Breast epithelium (tissue), 4 donors: ENCODE measurements at regions of chr12 and their contacts with region 1.

Region 1: GRCh38 chr12:70353780-70354660 is 12.1 kb upstream of the KCNMB4 start:
- DNase-seq: no peak
- H3K4me3 ChIP-seq: no peak overlapping the region
- H3K27ac ChIP-seq: no peak overlapping the region
- H3K4me1 ChIP-seq: no peaks in the 10 kb centered on the region
- H3K27me3 ChIP-seq: no peaks in the 10 kb centered on the region
- CTCF ChIP-seq: no peak
- POLR2A ChIP-seq: no peak

Region 2: GRCh38 chr12:69851976-69852375 is 502.0 kb before region 1 on chr12:
- intact Hi-C with region 1: no loop called
- DNase-seq: no peak
- H3K4me3 ChIP-seq: no peak overlapping the region
- H3K27ac ChIP-seq: no peak overlapping the region
- H3K4me1 ChIP-seq: no peaks in the 10 kb centered on the region
- H3K27me3 ChIP-seq: no peaks in the 10 kb centered on the region
- CTCF ChIP-seq: no peak
- POLR2A ChIP-seq: no peak

Region 3: GRCh38 chr12:70080566-70080965 is 273.5 kb before region 1 on chr12:
- intact Hi-C with region 1: loop called (anchors 10 kb)
- DNase-seq: no peak
- H3K4me3 ChIP-seq: no peak overlapping the region
- H3K27ac ChIP-seq: no peak overlapping the region
- H3K4me1 ChIP-seq: no peaks in the 10 kb centered on the region
- H3K27me3 ChIP-seq: no peaks in the 10 kb centered on the region
- CTCF ChIP-seq: no peak
- POLR2A ChIP-seq: no peak

Region 4: DNA sequence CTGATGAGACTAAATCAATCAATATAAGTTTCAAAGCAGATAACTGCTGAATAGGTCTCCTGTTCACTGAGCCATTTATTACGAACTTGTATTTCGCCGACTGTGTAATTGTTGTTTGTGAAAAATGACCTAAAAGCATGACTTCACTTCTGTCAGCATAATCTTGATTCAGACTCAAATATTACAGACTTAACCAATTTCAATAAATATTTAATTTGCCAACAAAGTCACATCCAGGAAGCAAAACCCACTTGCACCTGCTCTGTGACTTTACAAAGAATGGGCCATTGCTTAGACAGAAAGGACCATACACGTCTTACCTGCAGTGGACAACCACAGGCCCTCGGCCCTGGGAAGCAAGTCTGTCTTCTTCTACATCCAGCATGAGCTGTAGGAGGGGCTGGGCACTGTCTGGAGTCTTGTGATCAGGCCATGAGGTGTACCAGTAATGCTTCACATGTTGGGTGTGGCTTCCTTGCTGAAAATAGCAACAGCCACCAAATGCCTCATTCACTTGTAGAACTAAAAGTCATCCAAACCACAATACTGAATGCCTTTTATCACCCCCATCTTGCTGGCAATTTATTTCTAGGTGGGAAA is 306.7 kb after region 1 on chr12:
- intact Hi-C with region 1: no loop called
- DNase-seq: no peak
- H3K4me3 ChIP-seq: no peak overlapping the region
- H3K27ac ChIP-seq: no peak overlapping the region
- H3K4me1 ChIP-seq: no peaks in the 10 kb centered on the region
- H3K27me3 ChIP-seq: no peaks in the 10 kb centered on the region
- CTCF ChIP-seq: no peak
- POLR2A ChIP-seq: no peak

Region 5: GRCh38 chr12:71029302-71029701 is 675.3 kb after region 1 on chr12:
- intact Hi-C with region 1: loop called (anchors 5 kb)
- DNase-seq: no peak
- H3K4me3 ChIP-seq: no peak overlapping the region
- H3K27ac ChIP-seq: no peak overlapping the region
- H3K4me1 ChIP-seq: no peaks in the 10 kb centered on the region
- H3K27me3 ChIP-seq: no peaks in the 10 kb centered on the region
- CTCF ChIP-seq: no peak
- POLR2A ChIP-seq: no peak

Region 6: GRCh38 chr12:71282020-71282419 is 928.0 kb after region 1 on chr12:
- intact Hi-C with region 1: no loop called
- DNase-seq: no peak
- H3K4me3 ChIP-seq: no peak overlapping the region
- H3K27ac ChIP-seq: no peak overlapping the region
- H3K4me1 ChIP-seq: no peaks in the 10 kb centered on the region
- H3K27me3 ChIP-seq: no peaks in the 10 kb centered on the region
- CTCF ChIP-seq: no peak
- POLR2A ChIP-seq: no peak

Region 7: GRCh38 chr12:71335151-71335962 is 981.3 kb after region 1 on chr12:
- intact Hi-C with region 1: loop called (anchors 10 kb)
- DNase-seq: no peak
- H3K4me3 ChIP-seq: no peak overlapping the region
- H3K27ac ChIP-seq: no peak overlapping the region
- H3K4me1 ChIP-seq: no peaks in the 10 kb centered on the region
- H3K27me3 ChIP-seq: no peaks in the 10 kb centered on the region
- CTCF ChIP-seq: no peak
- POLR2A ChIP-seq: no peak